ENCODE measurements at regions of chr19 and their contacts with region 1.

Region 1: GRCh38 chr19:13861732-13862531 is 15.0 kb upstream of the NANOS3 start:
- DNase-seq: peak; percentile 92
- H3K4me3 Mint-ChIP-seq: peak overlapping the region; percentile 89
- H3K27ac Mint-ChIP-seq: peak overlapping the region; percentile 89
- H3K4me1 Mint-ChIP-seq: peaks cover 49% of the 10 kb centered on the region
- H3K27me3 Mint-ChIP-seq: peaks cover 24% of the 10 kb centered on the region

Region 2: GRCh38 chr19:13588957-13589833 is 272.7 kb before region 1 on chr19:
- CTCF ChIA-PET with region 1: interaction called, 11 read pairs
- POLR2A ChIA-PET with region 1: no interaction called
- DNase-seq: peak; percentile 81
- H3K4me3 Mint-ChIP-seq: no peak overlapping the region
- H3K27ac Mint-ChIP-seq: no peak overlapping the region
- H3K4me1 Mint-ChIP-seq: no peaks in the 10 kb centered on the region
- H3K27me3 Mint-ChIP-seq: no peaks in the 10 kb centered on the region

Region 3: GRCh38 chr19:13748169-13748828 is 113.6 kb before region 1 on chr19:
- CTCF ChIA-PET with region 1: interaction called, 20 read pairs
- POLR2A ChIA-PET with region 1: interaction called, 7 read pairs
- DNase-seq: peak; percentile 30
- H3K4me3 Mint-ChIP-seq: peak overlapping the region; percentile 86
- H3K27ac Mint-ChIP-seq: peak overlapping the region; percentile 75
- H3K4me1 Mint-ChIP-seq: peaks cover 28% of the 10 kb centered on the region
- H3K27me3 Mint-ChIP-seq: no peaks in the 10 kb centered on the region

Region 4: GRCh38 chr19:13784731-13785452 is 77.0 kb before region 1 on chr19:
- CTCF ChIA-PET with region 1: interaction called, 190 read pairs
- POLR2A ChIA-PET with region 1: interaction called, 66 read pairs
- DNase-seq: peak; percentile 77
- H3K4me3 Mint-ChIP-seq: peak overlapping the region; percentile 25
- H3K27ac Mint-ChIP-seq: peak overlapping the region; percentile 56
- H3K4me1 Mint-ChIP-seq: peaks cover 47% of the 10 kb centered on the region
- H3K27me3 Mint-ChIP-seq: no peaks in the 10 kb centered on the region

Region 5: DNA sequence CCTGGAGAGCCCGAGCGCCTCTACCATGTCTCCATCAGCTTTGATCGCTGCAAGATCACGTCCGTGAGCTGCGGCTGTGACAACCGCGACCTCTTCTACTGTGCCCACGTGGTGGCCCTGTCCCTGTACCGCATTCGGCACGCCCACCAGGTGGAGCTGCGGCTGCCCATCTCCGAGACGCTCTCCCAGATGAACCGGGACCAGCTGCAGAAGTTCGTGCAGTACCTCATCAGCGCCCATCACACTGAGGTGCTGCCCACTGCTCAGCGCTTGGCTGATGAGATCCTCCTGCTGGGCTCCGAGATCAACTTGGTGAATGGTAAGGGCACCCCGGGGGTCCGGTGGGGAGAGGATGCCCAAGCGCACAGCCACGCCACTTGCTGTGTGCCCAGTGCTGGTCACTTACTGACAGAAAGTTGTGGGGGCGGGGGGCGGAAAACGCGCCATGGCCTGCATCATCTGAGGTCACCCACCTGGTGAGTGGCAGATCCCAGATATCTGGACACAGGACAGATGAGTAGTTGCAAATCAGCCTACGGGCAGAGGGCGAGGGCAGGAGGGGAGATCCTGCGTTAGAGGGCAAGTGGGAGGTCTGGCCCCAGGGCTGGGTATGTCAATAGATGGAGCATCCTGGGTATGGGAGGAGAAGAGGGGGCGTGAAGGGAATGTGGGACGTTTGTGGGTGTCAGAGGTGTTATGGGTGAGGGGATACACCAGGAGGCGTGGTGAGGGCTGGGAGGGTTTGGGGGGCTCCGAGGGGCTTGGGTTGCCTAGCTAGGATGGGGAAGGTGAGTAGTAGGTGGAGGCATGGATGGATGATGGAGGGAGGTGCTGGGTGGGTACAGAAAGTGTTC is 56.9 kb before region 1 on chr19:
- CTCF ChIA-PET with region 1: interaction called, 14 read pairs
- POLR2A ChIA-PET with region 1: no interaction called
- DNase-seq: no peak
- H3K4me3 Mint-ChIP-seq: no peak overlapping the region
- H3K27ac Mint-ChIP-seq: no peak overlapping the region
- H3K4me1 Mint-ChIP-seq: no peaks in the 10 kb centered on the region
- H3K27me3 Mint-ChIP-seq: no peaks in the 10 kb centered on the region

Region 6: GRCh38 chr19:13839130-13839937 is 22.6 kb before region 1 on chr19:
- CTCF ChIA-PET with region 1: interaction called, 27 read pairs
- POLR2A ChIA-PET with region 1: interaction called, 28 read pairs
- DNase-seq: peak; percentile 89
- H3K4me3 Mint-ChIP-seq: peak overlapping the region; percentile 98
- H3K27ac Mint-ChIP-seq: peak overlapping the region; percentile 87
- H3K4me1 Mint-ChIP-seq: peaks cover 49% of the 10 kb centered on the region
- H3K27me3 Mint-ChIP-seq: no peaks in the 10 kb centered on the region

Region 7: DNA sequence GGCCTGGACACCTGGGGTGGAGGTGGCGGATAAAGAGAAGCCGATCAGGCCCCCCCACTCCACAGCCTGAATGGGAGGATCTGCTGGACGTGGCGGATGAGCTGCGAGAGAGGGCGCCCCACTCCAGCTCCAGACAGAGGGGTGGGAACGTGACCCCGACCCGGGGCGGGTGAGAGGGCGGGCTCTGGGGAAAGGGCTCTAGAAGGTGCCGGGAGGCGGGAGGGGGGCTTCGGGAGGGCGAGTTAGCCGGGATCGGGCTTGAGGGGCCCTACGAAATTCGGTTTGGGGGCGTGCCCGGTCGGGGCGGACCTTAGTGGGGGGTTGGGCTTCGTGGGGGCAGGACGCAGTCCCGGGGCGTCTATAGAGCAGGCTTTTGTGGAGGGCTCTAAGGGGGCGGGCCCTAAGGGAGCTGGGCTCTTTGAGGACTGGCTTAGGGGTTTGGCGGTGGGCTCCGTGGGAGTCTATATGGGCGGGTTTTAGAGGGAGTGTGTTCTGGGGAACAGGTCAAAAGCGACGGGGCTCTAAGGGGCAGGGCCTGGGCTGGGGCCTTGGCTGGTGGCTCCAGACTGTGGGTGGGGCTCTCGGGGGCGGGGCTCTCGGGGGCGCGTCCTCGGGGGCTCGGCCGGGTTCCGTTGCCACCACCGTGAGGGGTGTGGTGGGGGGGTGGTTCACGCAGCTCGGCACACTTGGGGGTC is 10.9 kb after region 1 on chr19:
- CTCF ChIA-PET with region 1: interaction called, 17 read pairs
- POLR2A ChIA-PET with region 1: interaction called, 3 read pairs
- DNase-seq: peak; percentile 41
- H3K4me3 Mint-ChIP-seq: peak overlapping the region; percentile 57
- H3K27ac Mint-ChIP-seq: no peak overlapping the region
- H3K4me1 Mint-ChIP-seq: peaks cover 2% of the 10 kb centered on the region
- H3K27me3 Mint-ChIP-seq: peaks cover 7% of the 10 kb centered on the region

Region 8: GRCh38 chr19:14117668-14118164 is 255.8 kb after region 1 on chr19 and contains the start of gene PRKACA:
- CTCF ChIA-PET with region 1: no interaction called
- POLR2A ChIA-PET with region 1: no interaction called
- DNase-seq: peak; percentile 99
- H3K4me3 Mint-ChIP-seq: peak within 1 kb of the TSS; percentile 90
- H3K27ac Mint-ChIP-seq: peak within 1 kb of the TSS; percentile 65
- H3K4me1 Mint-ChIP-seq: peaks cover 46% of the 10 kb centered on the region
- H3K27me3 Mint-ChIP-seq: no peaks in the 10 kb centered on the region
- total RNA-seq, gene PRKACA: 48.1 to 49.8 TPM

Measured in activated CD4-positive, alpha-beta memory T cell treated with anti-CD3 and anti-CD28 coated beads, Interleukin-2, amount 10 ng/mL, durations not matched to agents 7 days and 5 days (primary cell).